ENCODE measurements at regions of chr14 and their contacts with region 1.

Region 1: GRCh38 chr14:105045710-105046326 is 19.4 kb downstream of the GPR132 start:
- DNase-seq: peak; percentile 83 to 96 (median 89)
- ATAC-seq: peak; percentile 98
- H3K4me3 ChIP-seq: no peak overlapping the region
- H3K4me3 Mint-ChIP-seq: peak overlapping the region in 7 of 10 donors; percentile 16 to 56 (median 44)
- H3K27ac ChIP-seq: peak overlapping the region; percentile 46
- H3K27ac Mint-ChIP-seq: peak overlapping the region; percentile 11 to 92 (median 87)
- H3K4me1 ChIP-seq: peaks cover 0 to 9% of the 10 kb centered on the region in 2 donors
- H3K4me1 Mint-ChIP-seq: peaks cover 5 to 14% (median 10%) of the 10 kb centered on the region in 7 donors
- H3K27me3 ChIP-seq: no peaks in the 10 kb centered on the region
- H3K27me3 Mint-ChIP-seq: peaks cover 0 to 7% (median 0%) of the 10 kb centered on the region in 5 donors

Region 2: DNA sequence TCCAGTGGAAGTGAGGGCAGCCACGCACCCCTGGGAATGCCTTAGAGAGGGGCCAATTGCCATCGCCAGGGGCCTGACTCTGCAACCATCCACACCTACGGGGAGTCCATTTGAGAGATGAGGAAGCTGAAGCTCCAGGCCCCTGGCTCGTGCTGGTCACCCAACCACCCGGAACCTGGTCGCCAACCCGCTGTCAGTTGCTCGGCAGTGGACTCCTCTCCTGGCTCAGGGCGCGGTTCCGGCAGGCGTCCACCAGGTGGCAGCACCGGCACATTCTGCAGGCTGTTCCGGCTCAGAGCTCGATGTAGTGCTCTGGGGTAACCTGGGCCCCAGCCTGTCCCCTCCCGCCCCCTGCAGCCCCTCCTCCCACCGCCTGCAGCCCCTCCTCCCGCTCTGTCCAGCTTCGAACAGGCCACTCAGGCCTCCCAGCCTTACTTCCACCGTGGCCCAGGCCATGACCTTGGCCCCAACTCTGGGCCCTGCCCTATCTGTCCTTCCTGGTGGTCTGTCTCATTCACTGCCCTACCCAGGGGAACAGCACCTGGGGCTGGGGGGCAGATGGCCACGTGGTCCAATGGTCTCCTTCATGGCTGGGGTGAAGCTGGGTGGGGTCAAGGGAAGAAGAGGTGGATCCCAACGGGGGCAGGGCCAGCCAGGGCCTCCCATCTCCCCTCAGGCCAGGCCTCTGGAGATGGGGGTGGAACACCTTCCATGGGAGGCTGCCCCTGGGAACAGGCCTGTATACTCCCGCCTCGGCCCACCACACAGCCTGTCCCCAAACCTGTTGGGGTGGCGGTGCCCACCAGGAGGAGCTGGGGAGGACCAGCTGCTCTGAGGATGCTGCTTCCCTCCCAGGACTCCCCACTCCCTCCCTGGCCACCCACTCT is 277.1 kb before region 1 on chr14:
- CTCF ChIA-PET with region 1: interaction called, 3 read pairs
- POLR2A ChIA-PET with region 1: no interaction called
- intact Hi-C with region 1: loop called in 1 of 2 experiments (anchors 1 kb)
- DNase-seq: peak; percentile 78 to 96 (median 87)
- ATAC-seq: peak; percentile 96
- H3K4me3 ChIP-seq: no peak overlapping the region
- H3K4me3 Mint-ChIP-seq: peak overlapping the region in 1 of 10 donors; percentile 37
- H3K27ac ChIP-seq: no peak overlapping the region
- H3K27ac Mint-ChIP-seq: no peak overlapping the region
- H3K4me1 ChIP-seq: no peaks in the 10 kb centered on the region
- H3K4me1 Mint-ChIP-seq: peaks cover 0 to 10% (median 2%) of the 10 kb centered on the region in 7 donors
- H3K27me3 ChIP-seq: no peaks in the 10 kb centered on the region
- H3K27me3 Mint-ChIP-seq: no peaks in the 10 kb centered on the region

Region 3: DNA sequence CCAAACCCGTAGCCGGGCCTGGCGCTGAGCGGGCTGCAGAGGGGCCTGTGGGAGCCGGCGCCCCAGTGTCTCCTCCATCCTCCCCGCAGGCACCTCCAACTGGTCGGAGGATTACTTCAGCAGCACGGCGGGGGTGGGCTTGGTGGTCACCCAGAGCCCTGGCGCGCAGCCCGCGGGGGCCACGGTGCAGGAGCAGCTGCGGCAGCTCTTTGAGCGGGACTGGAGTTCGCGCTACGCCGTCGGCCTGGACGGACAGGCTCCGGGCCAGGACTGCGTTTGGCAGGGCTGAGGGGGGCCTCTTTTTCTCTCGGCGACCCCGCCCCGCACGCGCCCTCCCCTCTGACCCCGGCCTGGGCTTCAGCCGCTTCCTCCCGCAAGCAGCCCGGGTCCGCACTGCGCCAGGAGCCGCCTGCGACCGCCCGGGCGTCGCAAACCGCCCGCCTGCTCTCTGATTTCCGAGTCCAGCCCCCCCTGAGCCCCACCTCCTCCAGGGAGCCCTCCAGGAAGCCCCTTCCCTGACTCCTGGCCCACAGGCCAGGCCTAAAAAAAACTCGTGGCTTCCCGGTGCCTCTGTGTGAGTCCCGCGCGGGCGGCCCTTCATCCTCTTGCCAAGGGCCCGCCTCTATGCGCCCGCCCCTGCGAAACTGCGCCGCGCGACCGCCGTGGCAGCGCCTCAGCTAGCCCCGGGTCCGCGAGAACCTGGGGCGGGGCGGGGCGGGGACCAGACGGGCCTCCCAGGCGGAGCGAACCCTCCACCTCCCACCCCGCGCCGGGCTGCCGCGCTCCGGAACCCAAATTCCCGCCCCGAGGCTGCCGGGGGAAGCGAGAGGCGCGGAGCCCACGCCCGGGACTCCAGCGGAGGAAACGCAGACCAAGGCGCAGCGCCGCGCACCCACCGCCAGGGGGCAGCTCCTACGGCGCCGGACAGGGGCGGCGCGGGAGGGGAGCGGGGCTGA is 112.9 kb before region 1 on chr14:
- CTCF ChIA-PET with region 1: no interaction called
- POLR2A ChIA-PET with region 1: no interaction called
- intact Hi-C with region 1: loop called (anchors 1 kb)
- DNase-seq: peak; percentile 62 to 91 (median 83)
- ATAC-seq: peak; percentile 94
- H3K4me3 ChIP-seq: peak overlapping the region; percentile 20
- H3K4me3 Mint-ChIP-seq: peak overlapping the region in 8 of 10 donors; percentile 44 to 76 (median 64)
- H3K27ac ChIP-seq: peak overlapping the region; percentile 29
- H3K27ac Mint-ChIP-seq: no peak overlapping the region
- H3K4me1 ChIP-seq: peaks cover 0 to 4% of the 10 kb centered on the region in 2 donors
- H3K4me1 Mint-ChIP-seq: peaks cover 4 to 11% (median 8%) of the 10 kb centered on the region in 7 donors
- H3K27me3 ChIP-seq: no peaks in the 10 kb centered on the region
- H3K27me3 Mint-ChIP-seq: peaks cover 0 to 26% (median 4%) of the 10 kb centered on the region in 5 donors

Region 4: GRCh38 chr14:104985675-104986525 is 59.9 kb before region 1 on chr14 and contains the start of gene CLBA1:
- CTCF ChIA-PET with region 1: interaction called, 4 read pairs
- POLR2A ChIA-PET with region 1: interaction called, 8 read pairs
- intact Hi-C with region 1: loop called in 1 of 2 experiments (anchors 2 kb)
- DNase-seq: peak; percentile 81 to 90 (median 89)
- ATAC-seq: peak; percentile 96
- H3K4me3 ChIP-seq: peak within 1 kb of the TSS; percentile 56
- H3K4me3 Mint-ChIP-seq: peak within 1 kb of the TSS; percentile 64 to 86 (median 76)
- H3K27ac ChIP-seq: peak within 1 kb of the TSS; percentile 72
- H3K27ac Mint-ChIP-seq: peak within 1 kb of the TSS in 8 of 9 donors; percentile 74 to 89 (median 86)
- H3K4me1 ChIP-seq: no peaks in the 10 kb centered on the region
- H3K4me1 Mint-ChIP-seq: peaks cover 0 to 9% (median 4%) of the 10 kb centered on the region in 7 donors
- H3K27me3 ChIP-seq: no peaks in the 10 kb centered on the region
- H3K27me3 Mint-ChIP-seq: peaks cover 0 to 5% (median 4%) of the 10 kb centered on the region in 5 donors
- total RNA-seq, gene CLBA1: 0.51 to 2.1 (median 1.3) TPM

Region 5: DNA sequence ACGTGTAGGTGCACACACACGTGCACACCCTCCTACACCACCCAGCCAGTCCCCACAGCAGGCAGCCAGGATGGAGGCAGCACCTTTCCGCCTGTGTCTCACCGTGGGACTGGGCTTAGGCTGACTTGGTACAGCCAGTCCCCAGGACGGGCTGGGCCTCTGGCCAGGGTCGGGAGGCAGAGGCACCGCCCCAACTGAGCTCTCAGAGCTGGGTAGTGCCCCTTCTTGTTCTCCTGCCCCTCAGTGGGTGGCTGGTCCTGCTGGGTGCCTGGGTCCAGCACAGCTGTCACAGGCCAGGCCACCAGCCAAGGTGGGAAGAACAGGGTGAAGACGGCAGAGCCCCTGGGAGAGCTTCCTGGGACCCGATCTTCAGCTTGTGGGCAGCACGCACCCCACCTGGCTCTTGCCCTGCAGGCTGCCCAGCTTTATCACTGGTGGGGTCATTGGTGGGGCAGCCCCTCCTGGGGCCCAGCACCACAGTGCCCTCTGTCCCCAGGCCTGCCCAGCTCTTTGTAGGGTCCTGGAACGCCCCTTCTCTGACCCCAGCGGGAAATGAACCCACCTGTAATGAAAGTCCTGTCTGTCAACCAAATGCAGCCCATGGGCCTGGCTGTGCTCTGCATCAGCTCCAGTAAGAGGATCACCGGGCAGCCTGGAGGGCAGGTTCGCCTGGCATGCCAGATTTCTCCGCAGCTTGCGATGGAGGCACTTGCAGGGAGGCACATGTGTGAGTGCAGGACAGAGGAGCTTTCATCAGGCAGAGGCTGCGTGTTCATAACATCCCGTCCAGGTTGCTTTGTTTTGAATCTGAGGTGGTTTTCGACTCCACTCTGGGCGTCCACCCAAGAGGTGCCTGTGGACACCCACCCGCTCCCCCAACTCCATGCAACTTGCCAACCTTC is 39.6 kb before region 1 on chr14:
- CTCF ChIA-PET with region 1: no interaction called
- POLR2A ChIA-PET with region 1: no interaction called
- intact Hi-C with region 1: no loop called
- DNase-seq: no peak
- ATAC-seq: peak; percentile 34
- H3K4me3 ChIP-seq: no peak overlapping the region
- H3K4me3 Mint-ChIP-seq: no peak overlapping the region
- H3K27ac ChIP-seq: no peak overlapping the region
- H3K27ac Mint-ChIP-seq: no peak overlapping the region
- H3K4me1 ChIP-seq: no peaks in the 10 kb centered on the region
- H3K4me1 Mint-ChIP-seq: no peaks in the 10 kb centered on the region
- H3K27me3 ChIP-seq: no peaks in the 10 kb centered on the region
- H3K27me3 Mint-ChIP-seq: no peaks in the 10 kb centered on the region

Region 6: GRCh38 chr14:105065280-105066228 is 19.7 kb after region 1 on chr14 and contains the start of gene GPR132:
- CTCF ChIA-PET with region 1: interaction called, 3 read pairs
- POLR2A ChIA-PET with region 1: interaction called, 10 read pairs
- intact Hi-C with region 1: loop called (anchors 1 to 2 kb)
- DNase-seq: peak; percentile 73 to 99 (median 96)
- ATAC-seq: peak; percentile 93
- H3K4me3 ChIP-seq: peak within 1 kb of the TSS; percentile 97
- H3K4me3 Mint-ChIP-seq: peak within 1 kb of the TSS; percentile 82 to 96 (median 90)
- H3K27ac ChIP-seq: peak within 1 kb of the TSS; percentile 96
- H3K27ac Mint-ChIP-seq: peak within 1 kb of the TSS; percentile 93 to 99 (median 98)
- H3K4me1 ChIP-seq: peaks cover 66 to 80% of the 10 kb centered on the region in 2 donors
- H3K4me1 Mint-ChIP-seq: peaks cover 36 to 85% (median 58%) of the 10 kb centered on the region in 7 donors
- H3K27me3 ChIP-seq: no peaks in the 10 kb centered on the region
- H3K27me3 Mint-ChIP-seq: no peaks in the 10 kb centered on the region
- total RNA-seq, gene GPR132: 37.8 to 58.7 (median 45.2) TPM

Measured in naive thymus-derived CD4-positive, alpha-beta T cell (primary cell).